Activated CD4-positive, alpha-beta memory T cell treated with anti-CD3 and anti-CD28 coated beads for 36 hours (primary cell): ENCODE measurements at regions of chr12 and their contacts with region 1.

Region 1: GRCh38 chr12:32139064-32139421 is 32.4 kb downstream of the BICD1 start:
- DNase-seq: peak; percentile 67
- H3K4me3 Mint-ChIP-seq: peak overlapping the region; percentile 68
- H3K27ac Mint-ChIP-seq: no peak overlapping the region
- H3K4me1 Mint-ChIP-seq: peaks cover 20% of the 10 kb centered on the region
- H3K27me3 Mint-ChIP-seq: peaks cover 2% of the 10 kb centered on the region

Region 2: DNA sequence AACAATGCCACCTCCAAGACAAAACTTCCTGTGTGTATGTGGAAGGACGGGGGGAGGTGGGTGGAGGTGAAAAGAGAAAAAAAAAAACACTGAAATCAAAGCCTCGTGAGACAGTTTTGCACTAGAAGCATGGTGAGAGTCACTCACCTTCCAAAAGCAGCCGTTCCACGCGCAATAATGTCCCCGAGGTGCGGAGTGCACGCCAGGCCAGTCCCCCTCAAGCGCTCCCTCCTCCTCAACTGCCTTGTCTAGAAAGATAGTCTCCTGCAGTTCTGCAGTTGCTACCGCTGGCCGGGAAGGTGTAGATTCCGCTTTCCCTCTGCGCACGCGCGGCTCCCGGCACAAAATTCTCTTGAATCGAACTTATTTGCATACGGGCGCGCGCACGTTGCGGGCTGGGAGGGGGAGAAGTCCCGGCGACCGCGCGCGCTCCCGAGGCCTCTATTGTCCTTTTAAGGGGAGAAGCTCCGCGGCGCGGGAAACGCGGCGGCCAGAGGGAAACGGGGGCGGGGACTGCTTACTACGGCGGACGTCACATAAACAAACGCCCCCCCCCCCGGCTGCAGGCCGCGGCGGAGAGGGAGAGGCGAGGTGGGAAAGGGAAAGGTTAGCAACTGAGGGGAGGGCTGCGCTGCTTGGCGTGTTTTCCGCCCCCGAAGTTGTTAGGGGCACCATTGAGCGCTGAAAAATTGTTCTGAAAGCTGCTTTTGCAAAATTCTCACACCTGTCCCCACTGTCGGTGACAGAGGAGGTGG is 813.0 kb before region 1 on chr12 and contains the start of gene SINHCAF:
- CTCF ChIA-PET with region 1: no interaction called
- POLR2A ChIA-PET with region 1: no interaction called
- intact Hi-C with region 1: loop called (anchors 10 kb)
- DNase-seq: peak; percentile 99
- H3K4me3 Mint-ChIP-seq: peak within 1 kb of the TSS; percentile 100
- H3K27ac Mint-ChIP-seq: peak within 1 kb of the TSS; percentile 99
- H3K4me1 Mint-ChIP-seq: peaks cover 24% of the 10 kb centered on the region
- H3K27me3 Mint-ChIP-seq: peaks cover 2% of the 10 kb centered on the region
- total RNA-seq, gene SINHCAF: 181 to 186 TPM

Region 3: GRCh38 chr12:31749024-31749704 is 389.9 kb before region 1 on chr12:
- CTCF ChIA-PET with region 1: no interaction called
- POLR2A ChIA-PET with region 1: no interaction called
- intact Hi-C with region 1: loop called (anchors 5 kb)
- DNase-seq: peak; percentile 87
- H3K4me3 Mint-ChIP-seq: no peak overlapping the region
- H3K27ac Mint-ChIP-seq: peak overlapping the region; percentile 63
- H3K4me1 Mint-ChIP-seq: peaks cover 57% of the 10 kb centered on the region
- H3K27me3 Mint-ChIP-seq: no peaks in the 10 kb centered on the region

Region 4: DNA sequence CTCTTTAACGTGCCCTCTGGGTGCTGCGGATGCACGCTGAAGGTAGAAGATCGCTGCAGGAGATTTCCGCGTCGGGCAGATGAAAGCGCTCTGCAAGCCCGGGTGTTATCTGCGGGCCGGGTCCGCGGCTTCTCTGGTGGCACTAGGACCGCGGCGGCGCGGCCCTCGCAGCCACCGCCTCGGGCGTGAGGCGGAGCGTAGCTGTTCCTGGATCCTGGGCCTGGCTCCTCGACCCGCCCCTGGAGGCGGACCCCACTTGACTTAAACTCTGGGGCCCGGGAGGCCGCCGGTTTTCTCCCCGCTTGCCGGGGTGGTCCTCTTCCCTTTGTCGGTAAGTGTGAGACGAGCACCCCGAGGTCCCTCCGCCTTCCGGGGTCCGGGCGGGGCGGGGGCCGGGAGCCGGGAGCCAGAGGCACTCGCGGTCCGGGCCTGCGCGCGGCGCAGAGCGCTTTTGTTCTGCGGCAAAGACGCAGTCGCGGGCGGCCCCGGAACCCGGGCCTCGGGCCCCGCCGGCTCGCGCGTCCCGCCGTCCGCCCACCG is 179.8 kb before region 1 on chr12 and contains the start of gene RESF1:
- CTCF ChIA-PET with region 1: no interaction called
- POLR2A ChIA-PET with region 1: no interaction called
- intact Hi-C with region 1: loop called (anchors 5 kb)
- DNase-seq: peak; percentile 90
- H3K4me3 Mint-ChIP-seq: peak within 1 kb of the TSS; percentile 95
- H3K27ac Mint-ChIP-seq: peak within 1 kb of the TSS; percentile 97
- H3K4me1 Mint-ChIP-seq: peaks cover 68% of the 10 kb centered on the region
- H3K27me3 Mint-ChIP-seq: no peaks in the 10 kb centered on the region
- total RNA-seq, gene RESF1: 62.4 to 67.0 TPM

Region 5: DNA sequence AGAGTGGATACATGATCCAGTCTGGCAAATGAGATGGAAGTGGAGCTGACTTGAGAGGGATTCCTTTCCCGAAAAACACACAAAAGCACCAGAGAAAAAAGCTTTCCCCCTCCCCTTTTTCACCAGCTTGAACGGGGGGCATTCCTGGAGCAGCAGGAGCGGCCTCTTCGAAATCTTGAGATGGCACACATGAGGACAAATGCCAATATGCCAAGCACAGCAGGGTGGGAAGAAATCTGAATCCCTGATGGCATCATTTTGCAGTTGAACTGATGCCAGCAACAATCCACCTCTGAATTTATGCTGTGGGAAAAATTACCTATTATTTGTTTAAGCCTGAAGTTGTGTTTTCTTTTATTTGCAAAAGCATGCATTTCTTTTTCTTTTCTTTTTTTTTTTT is 62.1 kb before region 1 on chr12:
- CTCF ChIA-PET with region 1: no interaction called
- POLR2A ChIA-PET with region 1: no interaction called
- intact Hi-C with region 1: no loop called
- DNase-seq: no peak
- H3K4me3 Mint-ChIP-seq: no peak overlapping the region
- H3K27ac Mint-ChIP-seq: no peak overlapping the region
- H3K4me1 Mint-ChIP-seq: no peaks in the 10 kb centered on the region
- H3K27me3 Mint-ChIP-seq: no peaks in the 10 kb centered on the region

Region 6: GRCh38 chr12:32125455-32126084 is 13.5 kb before region 1 on chr12:
- CTCF ChIA-PET with region 1: interaction called, 3 read pairs
- POLR2A ChIA-PET with region 1: interaction called, 5 read pairs
- intact Hi-C with region 1: loop called (anchors 1 kb)
- DNase-seq: no peak
- H3K4me3 Mint-ChIP-seq: no peak overlapping the region
- H3K27ac Mint-ChIP-seq: no peak overlapping the region
- H3K4me1 Mint-ChIP-seq: peaks cover 7% of the 10 kb centered on the region
- H3K27me3 Mint-ChIP-seq: no peaks in the 10 kb centered on the region

Region 7: DNA sequence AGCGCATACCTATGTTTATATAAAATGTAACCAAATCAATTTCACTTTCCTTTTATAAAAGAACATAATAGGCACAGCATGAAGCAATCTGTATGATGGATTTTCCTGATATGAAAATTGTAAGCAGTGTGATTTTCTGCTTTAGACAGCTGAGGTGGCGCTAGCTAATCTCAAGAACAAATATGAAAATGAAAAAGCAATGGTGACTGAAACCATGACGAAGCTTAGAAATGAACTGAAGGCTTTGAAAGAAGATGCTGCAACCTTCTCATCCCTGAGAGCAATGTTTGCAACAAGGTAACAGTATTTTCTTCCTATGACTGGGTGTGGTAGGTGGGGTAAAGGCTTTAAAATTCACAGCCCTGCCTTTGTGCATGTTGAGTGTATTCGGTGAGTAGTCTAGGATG is 195.3 kb after region 1 on chr12:
- CTCF ChIA-PET with region 1: no interaction called
- POLR2A ChIA-PET with region 1: interaction called, 4 read pairs
- intact Hi-C with region 1: loop called (anchors 1 kb)
- DNase-seq: peak; percentile 11
- H3K4me3 Mint-ChIP-seq: no peak overlapping the region
- H3K27ac Mint-ChIP-seq: peak overlapping the region; percentile 51
- H3K4me1 Mint-ChIP-seq: peaks cover 5% of the 10 kb centered on the region
- H3K27me3 Mint-ChIP-seq: no peaks in the 10 kb centered on the region